ENCODE measurements at regions of chr1 and their contacts with region 1.

Region 1: GRCh38 chr1:200971955-200972711 is 51.4 kb downstream of the KIF21B start:
- DNase-seq: no peak
- H3K4me3 ChIP-seq: no peak overlapping the region
- CTCF ChIP-seq: peak; percentile 68

Region 2: DNA sequence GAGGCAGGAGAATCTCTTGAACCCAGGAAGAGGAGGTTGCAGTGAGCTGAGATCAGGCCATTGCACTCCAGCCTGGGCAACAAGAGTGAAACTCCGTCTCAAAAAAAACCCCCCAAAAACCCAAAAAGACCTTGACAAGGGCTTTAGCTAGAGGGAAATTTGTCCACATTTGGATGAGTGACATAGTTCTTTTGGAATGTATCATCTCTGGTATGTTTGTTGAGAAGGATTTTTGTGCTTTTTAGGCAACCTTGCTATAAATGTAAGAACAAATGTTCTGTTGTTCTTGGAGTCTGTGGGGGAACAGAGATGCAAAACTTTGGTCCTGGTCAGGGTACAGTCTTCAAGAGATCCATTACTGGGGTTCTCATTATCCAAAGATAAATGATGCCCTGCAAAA is 48.5 kb before region 1 on chr1:
- CTCF ChIA-PET with region 1: interaction called, 10 read pairs
- POLR2A ChIA-PET with region 1: no interaction called
- DNase-seq: no peak
- H3K4me3 ChIP-seq: no peak overlapping the region
- CTCF ChIP-seq: no peak

Region 3: DNA sequence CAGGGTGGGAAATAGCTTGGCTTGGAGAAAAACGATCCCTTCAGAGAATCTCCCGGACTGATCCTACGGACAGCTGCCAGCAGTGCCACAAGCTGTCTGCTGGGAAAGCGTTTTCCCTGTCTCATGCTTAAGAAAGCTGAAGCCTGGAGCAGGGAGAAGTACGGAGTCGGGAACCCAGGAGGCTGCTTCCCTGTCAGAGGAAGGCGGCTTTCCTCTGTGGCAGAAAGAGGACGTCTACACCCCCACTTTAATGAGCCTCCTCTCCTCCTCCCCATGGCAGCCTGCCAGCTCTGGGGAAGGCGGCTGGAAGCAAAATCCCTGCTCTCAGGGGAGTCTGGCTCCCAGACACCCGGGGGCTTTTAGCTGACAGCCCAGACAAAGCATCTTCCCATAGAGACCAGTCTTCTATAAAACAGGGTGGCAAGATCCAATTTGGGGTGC is 44.1 kb after region 1 on chr1:
- CTCF ChIA-PET with region 1: interaction called, 26 read pairs
- POLR2A ChIA-PET with region 1: no interaction called
- DNase-seq: no peak
- H3K4me3 ChIP-seq: no peak overlapping the region
- CTCF ChIP-seq: no peak

Region 4: GRCh38 chr1:201053158-201053860 is 81.2 kb after region 1 on chr1:
- CTCF ChIA-PET with region 1: interaction called, 75 read pairs
- POLR2A ChIA-PET with region 1: no interaction called
- DNase-seq: no peak
- H3K4me3 ChIP-seq: no peak overlapping the region
- CTCF ChIP-seq: no peak

Region 5: DNA sequence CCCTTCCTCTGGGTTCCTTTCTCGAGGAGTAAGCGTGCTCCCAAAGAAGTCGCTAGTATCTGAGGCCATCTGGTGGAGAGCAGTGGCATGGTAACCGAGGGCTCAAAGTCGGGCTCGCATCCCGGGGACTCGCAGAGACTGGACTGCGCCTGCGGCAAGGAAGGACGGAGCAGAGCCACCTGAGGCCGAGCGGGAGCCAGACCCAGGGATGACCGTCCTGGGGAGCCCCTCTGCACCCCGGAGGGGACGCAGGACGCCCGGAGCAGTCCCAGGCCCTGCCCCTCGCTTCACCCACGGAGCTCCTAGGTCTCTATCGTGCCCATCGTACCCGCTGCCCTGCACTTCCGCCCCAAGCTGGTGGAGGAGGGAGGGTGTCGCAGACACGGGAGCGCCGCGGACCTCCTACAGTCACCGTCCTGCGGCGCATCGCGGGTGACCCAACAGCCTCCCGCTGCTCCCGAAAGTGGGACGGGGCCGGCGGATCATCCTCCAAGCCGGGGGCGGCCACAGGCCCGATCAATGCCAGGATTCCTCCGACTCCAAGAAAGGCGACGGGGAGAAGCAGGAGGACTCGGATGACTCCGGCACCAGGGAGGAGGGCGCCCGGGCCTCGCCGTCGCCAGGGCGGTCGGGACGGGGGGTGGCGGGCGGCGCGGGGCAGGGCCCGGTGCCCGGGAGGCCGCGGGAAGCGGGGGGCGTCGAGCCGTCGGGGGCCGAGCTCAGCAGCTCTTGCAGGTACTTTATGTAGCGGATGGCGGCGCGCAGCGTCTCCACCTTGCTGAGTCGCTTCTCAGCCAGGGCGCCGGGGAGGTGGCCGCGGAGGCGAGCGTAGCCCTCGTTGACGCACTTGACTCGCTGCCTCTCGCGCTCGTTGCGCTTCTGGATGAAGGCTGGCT is 142.4 kb after region 1 on chr1:
- CTCF ChIA-PET with region 1: interaction called, 78 read pairs
- POLR2A ChIA-PET with region 1: no interaction called
- DNase-seq: no peak
- H3K4me3 ChIP-seq: peak overlapping the region; percentile 67
- CTCF ChIP-seq: peak; percentile 94